Panc1 (cell line): ENCODE measurements at regions of chr6 and their contacts with region 1.

Region 1: DNA sequence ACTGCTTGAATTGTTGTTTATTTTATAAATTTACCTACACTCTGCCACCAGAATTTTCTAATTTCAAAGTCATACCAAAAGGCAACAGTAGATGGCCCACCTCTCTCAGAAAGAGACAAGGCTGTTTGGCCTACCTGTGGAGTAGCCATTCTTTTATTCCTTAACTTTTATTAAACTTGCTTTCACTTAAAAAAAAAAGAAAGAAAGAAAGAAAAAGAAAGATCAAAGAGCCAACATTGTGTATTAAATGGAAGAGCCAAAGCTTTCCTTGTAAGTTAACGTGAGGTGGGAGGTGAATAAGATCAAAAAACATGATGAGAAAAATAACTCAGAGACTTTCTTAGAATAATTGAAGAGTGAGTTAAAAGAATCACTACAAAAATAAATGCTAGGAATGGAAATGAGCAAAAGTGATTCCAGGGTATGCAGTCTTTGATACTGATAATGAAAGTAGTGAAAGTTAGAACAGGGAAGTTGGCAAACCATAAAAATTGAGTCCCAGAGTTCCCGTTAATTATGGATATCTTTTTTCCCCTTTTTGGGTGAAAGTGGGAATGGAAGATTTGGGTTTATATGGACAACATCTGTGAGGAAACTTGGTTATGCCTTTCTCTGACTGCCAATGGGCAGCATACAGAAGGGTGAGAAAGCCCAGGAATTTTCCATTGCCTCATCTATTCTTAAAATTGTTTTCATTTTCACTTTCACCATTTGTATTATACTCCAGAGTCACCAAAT is 35.9 kb upstream of the MYB start:
- DNase-seq: no peak
- ATAC-seq: no peak
- H3K4me3 ChIP-seq: no peak overlapping the region
- H3K27ac ChIP-seq: no peak overlapping the region
- H3K4me1 ChIP-seq: no peaks in the 10 kb centered on the region
- H3K27me3 ChIP-seq: 0 out of 2 replicates have a peak, but pooled peaks cover 3% of the 10 kb centered on the region
- CTCF ChIP-seq: peak; percentile 67; the same call in 1 of the 2 replicates

Region 2: DNA sequence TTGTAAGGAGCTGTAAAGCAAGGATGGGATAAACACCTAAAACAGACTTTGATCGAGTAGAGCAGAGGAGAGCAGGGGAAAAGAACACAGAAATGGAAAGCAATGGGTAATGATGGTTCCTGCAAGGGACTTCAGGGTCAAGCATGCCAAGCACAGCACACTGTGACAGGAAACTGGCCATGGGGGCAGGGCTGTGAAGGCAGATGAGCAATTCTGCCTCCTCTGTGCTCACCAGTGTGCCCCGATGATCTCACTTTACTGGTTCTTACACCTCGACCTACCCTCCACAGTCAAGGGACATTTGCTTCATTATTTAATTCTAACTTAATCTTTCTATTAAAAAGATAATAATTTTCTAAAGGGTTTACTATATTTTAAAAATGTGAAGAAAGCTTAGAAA is 14.3 kb after region 1 on chr6:
- CTCF ChIA-PET with region 1: no interaction called
- POLR2A ChIA-PET with region 1: no interaction called
- in situ Hi-C with region 1: no loop called
- intact Hi-C with region 1: no loop called
- DNase-seq: no peak
- ATAC-seq: no peak
- H3K4me3 ChIP-seq: no peak overlapping the region
- H3K27ac ChIP-seq: no peak overlapping the region
- H3K4me1 ChIP-seq: no peaks in the 10 kb centered on the region
- H3K27me3 ChIP-seq: no peaks in the 10 kb centered on the region; the same call in 1 of the 2 replicates
- CTCF ChIP-seq: no peak

Region 3: DNA sequence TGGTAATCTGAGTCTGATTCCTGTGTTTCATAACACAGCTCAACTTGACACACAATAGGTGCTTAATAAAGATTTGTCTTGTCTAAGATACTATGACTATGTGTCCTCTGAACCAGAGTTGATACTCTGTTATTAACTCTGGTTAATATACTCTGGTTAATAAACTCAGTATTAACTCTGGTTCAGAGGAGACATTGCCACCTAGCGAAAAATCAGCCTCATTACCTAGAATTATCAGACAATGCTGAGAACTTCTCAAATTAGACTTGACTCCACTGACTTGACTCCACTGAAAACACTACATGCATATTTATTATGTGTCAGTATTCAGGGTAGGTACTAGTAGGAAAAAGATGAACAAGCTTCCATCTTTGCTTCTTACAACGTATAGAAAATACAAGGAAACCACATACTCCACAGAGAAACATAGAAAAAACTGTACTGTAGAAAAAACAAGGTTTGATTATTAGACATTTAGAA is 278.5 kb after region 1 on chr6:
- CTCF ChIA-PET with region 1: no interaction called
- POLR2A ChIA-PET with region 1: no interaction called
- in situ Hi-C with region 1: no loop called
- intact Hi-C with region 1: loop called (anchors 2 kb)
- DNase-seq: no peak
- ATAC-seq: peak; percentile 78
- H3K4me3 ChIP-seq: no peak overlapping the region
- H3K27ac ChIP-seq: no peak overlapping the region
- H3K4me1 ChIP-seq: no peaks in the 10 kb centered on the region
- H3K27me3 ChIP-seq: no peaks in the 10 kb centered on the region
- CTCF ChIP-seq: peak; percentile 76; the same call in 1 of the 2 replicates